Activated CD4-positive, alpha-beta memory T cell treated with anti-CD3 and anti-CD28 coated beads for 36 hours (primary cell): ENCODE measurements at regions of chr6 and their contacts with region 1.

Region 1: DNA sequence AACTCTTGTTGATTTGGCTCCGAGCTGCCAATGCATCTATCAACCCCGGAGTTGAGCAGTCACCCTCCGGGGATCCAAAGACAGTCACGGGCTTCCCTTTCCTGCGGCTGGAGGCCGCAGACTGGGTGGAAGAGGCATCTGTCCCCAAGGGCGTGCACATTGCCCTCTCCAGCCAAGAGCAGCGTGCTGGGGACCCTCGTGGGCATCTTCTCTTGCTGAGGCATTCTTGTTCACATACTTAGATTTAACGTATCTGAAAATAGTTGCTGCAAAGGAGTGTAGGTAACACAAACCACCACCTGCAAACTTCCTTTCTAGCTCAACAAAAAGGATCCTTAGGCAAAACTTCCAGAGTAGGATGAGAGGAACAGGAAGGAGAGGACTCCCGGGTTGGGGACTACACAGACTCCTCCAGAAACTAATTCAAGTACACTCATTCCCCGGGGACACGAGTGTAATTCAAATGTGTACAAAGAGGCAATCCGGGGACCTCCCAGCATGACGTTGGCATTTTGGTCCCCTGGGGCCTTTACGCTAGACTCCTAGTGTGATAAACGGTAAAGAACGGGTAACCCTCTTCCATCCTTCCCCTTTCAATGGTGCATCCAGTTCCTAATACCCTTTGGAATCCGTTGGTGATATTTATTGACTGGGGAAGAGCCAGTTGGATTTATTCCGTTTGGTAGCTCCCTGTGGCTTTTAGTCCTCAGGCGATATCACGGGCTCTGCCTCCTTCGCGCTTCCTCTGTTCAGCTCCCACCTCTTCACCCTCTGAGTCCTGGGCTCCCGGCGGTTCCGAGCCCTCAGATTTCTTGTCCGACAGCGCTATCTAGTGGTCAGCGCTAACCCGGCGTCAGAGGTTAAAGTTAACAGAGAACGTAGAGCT is 2.7 kb upstream of the COL12A1 start:
- DNase-seq: peak; percentile 89
- H3K4me3 Mint-ChIP-seq: peak overlapping the region; percentile 49
- H3K27ac Mint-ChIP-seq: no peak overlapping the region
- H3K4me1 Mint-ChIP-seq: peaks cover 47% of the 10 kb centered on the region
- H3K27me3 Mint-ChIP-seq: peaks cover 64% of the 10 kb centered on the region

Region 2: GRCh38 chr6:73675466-73676098 is 1533.0 kb before region 1 on chr6:
- CTCF ChIA-PET with region 1: interaction called, 26 read pairs
- POLR2A ChIA-PET with region 1: no interaction called
- intact Hi-C with region 1: loop called (anchors 5 kb)
- DNase-seq: peak; percentile 76
- H3K4me3 Mint-ChIP-seq: no peak overlapping the region
- H3K27ac Mint-ChIP-seq: no peak overlapping the region
- H3K4me1 Mint-ChIP-seq: peaks cover 2% of the 10 kb centered on the region
- H3K27me3 Mint-ChIP-seq: peaks cover 8% of the 10 kb centered on the region

Region 3: DNA sequence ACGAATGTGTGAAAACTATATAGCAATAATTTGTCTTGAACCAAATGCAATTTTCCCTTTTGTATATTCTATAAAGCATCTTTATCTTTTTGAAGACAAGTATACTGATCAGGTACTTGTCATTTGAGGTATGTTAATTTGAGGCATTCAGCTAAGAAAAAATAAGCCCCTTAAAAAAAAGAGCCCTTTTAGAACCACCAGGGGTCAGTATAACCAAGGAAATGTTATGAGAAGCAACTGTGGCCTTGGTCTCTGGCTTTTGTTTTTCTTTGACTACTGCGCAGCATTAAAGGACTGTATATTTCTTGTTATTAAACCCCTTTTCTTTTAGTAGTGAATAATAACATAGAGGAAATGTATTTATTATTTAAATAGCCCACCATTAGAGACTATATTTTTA is 1469.4 kb before region 1 on chr6:
- CTCF ChIA-PET with region 1: interaction called, 169 read pairs
- POLR2A ChIA-PET with region 1: no interaction called
- intact Hi-C with region 1: loop called (anchors 2 kb)
- DNase-seq: no peak
- H3K4me3 Mint-ChIP-seq: no peak overlapping the region
- H3K27ac Mint-ChIP-seq: no peak overlapping the region
- H3K4me1 Mint-ChIP-seq: no peaks in the 10 kb centered on the region
- H3K27me3 Mint-ChIP-seq: no peaks in the 10 kb centered on the region

Region 4: GRCh38 chr6:73854998-73855718 is 1353.4 kb before region 1 on chr6:
- CTCF ChIA-PET with region 1: interaction called, 37 read pairs
- POLR2A ChIA-PET with region 1: no interaction called
- intact Hi-C with region 1: loop called (anchors 1 kb)
- DNase-seq: no peak
- H3K4me3 Mint-ChIP-seq: no peak overlapping the region
- H3K27ac Mint-ChIP-seq: no peak overlapping the region
- H3K4me1 Mint-ChIP-seq: no peaks in the 10 kb centered on the region
- H3K27me3 Mint-ChIP-seq: no peaks in the 10 kb centered on the region

Region 5: GRCh38 chr6:74091136-74091793 is 1117.3 kb before region 1 on chr6:
- CTCF ChIA-PET with region 1: interaction called, 129 read pairs
- POLR2A ChIA-PET with region 1: no interaction called
- intact Hi-C with region 1: loop called (anchors 1 kb)
- DNase-seq: no peak
- H3K4me3 Mint-ChIP-seq: no peak overlapping the region
- H3K27ac Mint-ChIP-seq: no peak overlapping the region
- H3K4me1 Mint-ChIP-seq: no peaks in the 10 kb centered on the region
- H3K27me3 Mint-ChIP-seq: peaks cover 3% of the 10 kb centered on the region

Region 6: DNA sequence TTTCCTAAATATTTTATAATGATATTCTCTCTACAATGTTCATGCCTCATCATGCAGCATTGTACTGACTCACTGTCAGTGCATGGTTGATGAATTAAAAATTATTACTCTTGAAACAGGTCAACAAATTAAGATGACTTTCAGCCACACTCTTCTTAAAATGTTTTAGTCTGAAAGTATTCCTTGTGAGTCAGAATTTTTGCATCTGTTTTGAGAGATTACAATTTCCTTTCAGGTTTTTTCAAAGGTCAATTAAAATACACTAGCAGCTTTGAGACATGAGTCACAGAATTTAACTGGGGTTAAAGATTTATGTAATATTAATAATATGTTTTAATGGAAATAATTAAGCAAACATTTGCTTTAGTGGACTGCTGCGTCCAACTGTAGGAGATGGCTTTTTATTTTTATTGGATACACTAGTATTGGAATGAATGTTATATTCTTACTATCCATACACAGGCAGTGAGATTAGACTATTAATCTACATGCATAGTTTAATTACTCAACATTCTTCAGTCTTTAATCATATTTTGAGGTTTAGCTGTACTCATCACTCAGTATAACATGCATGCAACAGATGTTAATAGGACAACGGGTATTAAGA is 12.4 kb before region 1 on chr6:
- CTCF ChIA-PET with region 1: interaction called, 13 read pairs
- POLR2A ChIA-PET with region 1: no interaction called
- intact Hi-C with region 1: no loop called
- DNase-seq: no peak
- H3K4me3 Mint-ChIP-seq: no peak overlapping the region
- H3K27ac Mint-ChIP-seq: no peak overlapping the region
- H3K4me1 Mint-ChIP-seq: no peaks in the 10 kb centered on the region
- H3K27me3 Mint-ChIP-seq: peaks cover 13% of the 10 kb centered on the region

Region 7: GRCh38 chr6:75230484-75231325 is 22.2 kb after region 1 on chr6:
- CTCF ChIA-PET with region 1: interaction called, 14 read pairs
- POLR2A ChIA-PET with region 1: no interaction called
- intact Hi-C with region 1: no loop called
- DNase-seq: no peak
- H3K4me3 Mint-ChIP-seq: no peak overlapping the region
- H3K27ac Mint-ChIP-seq: no peak overlapping the region
- H3K4me1 Mint-ChIP-seq: no peaks in the 10 kb centered on the region
- H3K27me3 Mint-ChIP-seq: no peaks in the 10 kb centered on the region

Region 8: DNA sequence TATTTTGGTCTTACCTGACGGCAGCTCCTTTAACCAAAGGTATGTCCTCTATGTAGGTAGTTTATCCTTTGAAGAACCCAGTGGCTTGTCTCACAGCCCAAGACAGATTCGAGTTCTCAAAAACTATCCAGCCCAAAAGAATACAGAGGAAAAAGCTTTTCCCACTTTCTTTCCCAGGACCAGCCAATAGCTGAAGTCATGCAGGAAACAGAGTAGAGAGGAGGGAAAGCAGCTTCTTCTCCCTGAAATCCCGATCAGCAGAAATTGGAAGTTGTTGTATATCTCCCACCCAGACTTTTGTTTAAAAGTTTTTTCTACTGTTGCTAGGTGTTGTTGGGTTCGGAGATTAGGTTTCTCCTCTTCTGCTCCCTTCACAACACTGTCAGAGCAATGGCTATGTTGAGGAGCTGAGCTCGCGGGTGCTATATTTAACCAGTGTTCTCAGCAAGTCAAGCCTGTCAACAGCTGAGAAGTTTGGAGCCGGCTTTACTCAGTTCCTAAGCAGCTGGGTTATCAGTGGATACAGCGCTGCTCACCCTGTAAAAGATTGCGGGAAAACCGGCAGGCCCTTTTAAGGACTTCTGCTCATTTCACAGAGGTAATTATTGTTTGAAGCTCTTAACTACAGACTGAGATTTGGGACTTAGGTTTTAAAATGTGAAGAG is 285.0 kb after region 1 on chr6 and contains the start of gene FILIP1:
- CTCF ChIA-PET with region 1: no interaction called
- POLR2A ChIA-PET with region 1: no interaction called
- intact Hi-C with region 1: no loop called
- DNase-seq: no peak
- H3K4me3 Mint-ChIP-seq: no peak within 1 kb of the TSS
- H3K27ac Mint-ChIP-seq: no peak within 1 kb of the TSS
- H3K4me1 Mint-ChIP-seq: peaks cover 11% of the 10 kb centered on the region
- H3K27me3 Mint-ChIP-seq: peaks cover 23% of the 10 kb centered on the region
- total RNA-seq, gene FILIP1: not detected